ENCODE measurements at regions of chr10 and their contacts with region 1.

Region 1: DNA sequence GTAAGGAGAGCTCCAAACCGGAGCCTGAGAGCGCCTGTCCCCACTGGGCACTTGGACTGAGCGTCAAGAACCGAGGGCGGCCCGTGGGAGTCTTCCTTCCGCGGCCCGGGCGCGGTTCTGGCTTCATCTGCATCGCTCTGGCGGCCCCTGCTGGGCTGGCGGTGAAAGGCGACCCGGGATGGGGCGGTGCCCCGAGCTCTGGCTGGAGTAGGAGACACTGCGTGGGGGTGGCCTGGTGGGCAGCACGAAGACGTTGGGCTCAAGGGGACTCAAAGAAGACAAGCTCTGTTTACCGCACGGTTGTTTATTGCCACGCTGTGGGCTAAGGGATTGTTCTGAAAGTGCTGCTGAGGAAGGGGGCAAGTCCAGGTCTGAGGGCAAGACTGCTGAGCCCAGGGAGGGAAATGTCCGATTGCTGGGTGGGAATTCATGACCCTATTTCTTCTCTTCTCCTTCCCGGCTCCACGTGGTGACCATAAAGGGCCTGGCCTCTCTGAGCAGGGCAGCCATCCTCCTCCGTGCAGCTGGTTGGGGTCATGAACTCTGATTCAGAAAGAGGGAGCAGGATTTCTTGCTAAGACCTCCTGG is 29.8 kb downstream of the PLAU start:
- DNase-seq: peak; percentile 67 to 76 (median 74)
- H3K4me3 ChIP-seq: peak overlapping the region in 4 of 7 experiments; percentile 22 to 61 (median 44)
- H3K27ac ChIP-seq: peak overlapping the region in 1 of 2 experiments; percentile 43
- H3K4me1 ChIP-seq: peaks cover 0 to 11% (median 6%) of the 10 kb centered on the region in 4 experiments
- H3K27me3 ChIP-seq: no peaks in the 10 kb centered on the region

Region 2: DNA sequence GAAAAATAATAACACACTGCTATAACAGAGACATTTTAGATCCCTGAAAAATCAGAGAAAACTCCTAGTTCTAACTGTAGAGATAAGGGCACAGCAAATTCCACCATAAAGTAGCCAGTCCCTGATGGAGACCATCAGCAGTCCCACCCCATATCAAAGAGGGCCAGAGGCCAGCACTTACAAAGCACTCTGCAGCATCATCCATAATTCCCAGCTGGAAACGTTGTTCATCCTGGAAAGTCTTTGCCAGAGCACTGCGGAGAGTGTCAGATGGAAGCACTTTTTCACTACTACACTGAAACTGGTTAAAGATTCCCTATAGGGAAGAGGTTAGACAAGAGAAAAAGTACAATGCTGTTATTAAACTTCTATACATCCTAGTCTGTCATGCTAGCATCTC is 395.4 kb before region 1 on chr10:
- CTCF ChIA-PET with region 1: no interaction called
- POLR2A ChIA-PET with region 1: no interaction called
- DNase-seq: no peak
- H3K4me3 ChIP-seq: no peak overlapping the region
- H3K27ac ChIP-seq: no peak overlapping the region
- H3K4me1 ChIP-seq: no peaks in the 10 kb centered on the region
- H3K27me3 ChIP-seq: no peaks in the 10 kb centered on the region

Region 3: DNA sequence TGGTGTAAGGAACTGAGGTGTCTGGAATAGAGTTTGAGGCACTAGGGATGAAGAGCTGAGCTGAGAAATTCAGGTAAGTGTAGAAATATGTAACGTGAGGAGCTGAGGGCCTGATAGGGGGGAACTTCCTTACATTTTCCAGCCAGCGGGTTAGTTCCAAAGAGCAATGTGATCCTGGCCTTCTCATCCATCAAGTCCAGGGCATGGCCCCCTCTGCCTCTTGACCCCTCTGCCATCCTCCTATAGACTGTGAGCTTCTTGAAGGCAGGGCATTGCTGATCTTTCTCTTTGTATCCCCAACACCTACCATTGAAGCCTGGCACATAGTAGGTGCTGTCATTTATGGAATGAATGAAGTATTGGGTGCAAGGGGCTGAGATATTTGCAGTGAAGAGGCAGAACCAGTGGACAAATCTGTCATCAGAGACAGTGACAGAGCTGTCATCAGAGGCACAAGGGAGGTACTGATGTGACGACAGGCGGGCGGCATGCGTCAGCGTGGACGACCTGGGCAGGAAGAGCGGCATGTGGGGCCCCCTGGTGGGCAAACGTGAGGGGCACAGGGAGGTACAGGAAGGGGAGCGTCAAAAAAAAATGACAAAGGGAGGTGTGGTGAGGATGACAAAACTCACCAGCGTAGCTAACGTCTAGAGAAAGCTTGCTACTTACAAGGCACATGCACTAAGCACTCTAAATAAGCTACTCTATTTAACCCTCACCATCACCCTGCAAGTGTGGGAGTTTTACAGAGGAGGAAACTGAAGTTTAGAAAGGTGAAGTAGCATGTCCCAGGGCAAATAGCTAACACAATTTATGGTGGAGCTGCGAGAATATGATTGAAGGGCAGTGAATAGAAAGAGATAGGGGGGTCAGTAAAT is 61.2 kb before region 1 on chr10:
- CTCF ChIA-PET with region 1: interaction called, 590 read pairs
- POLR2A ChIA-PET with region 1: no interaction called
- DNase-seq: peak; percentile 94 to 96 (median 95)
- H3K4me3 ChIP-seq: peak overlapping the region in 1 of 7 experiments; percentile 44
- H3K27ac ChIP-seq: no peak overlapping the region
- H3K4me1 ChIP-seq: peaks cover 5 to 48% (median 23%) of the 10 kb centered on the region in 4 experiments
- H3K27me3 ChIP-seq: no peaks in the 10 kb centered on the region

Region 4: GRCh38 chr10:73956476-73957359 is 16.0 kb after region 1 on chr10:
- CTCF ChIA-PET with region 1: interaction called, 16 read pairs
- POLR2A ChIA-PET with region 1: no interaction called
- DNase-seq: peak; percentile 89 to 98 (median 96)
- H3K4me3 ChIP-seq: peak overlapping the region in 6 of 7 experiments; percentile 1 to 63 (median 36)
- H3K27ac ChIP-seq: peak overlapping the region; percentile 78 to 86
- H3K4me1 ChIP-seq: peaks cover 40 to 50% (median 43%) of the 10 kb centered on the region in 4 experiments
- H3K27me3 ChIP-seq: no peaks in the 10 kb centered on the region

Region 5: DNA sequence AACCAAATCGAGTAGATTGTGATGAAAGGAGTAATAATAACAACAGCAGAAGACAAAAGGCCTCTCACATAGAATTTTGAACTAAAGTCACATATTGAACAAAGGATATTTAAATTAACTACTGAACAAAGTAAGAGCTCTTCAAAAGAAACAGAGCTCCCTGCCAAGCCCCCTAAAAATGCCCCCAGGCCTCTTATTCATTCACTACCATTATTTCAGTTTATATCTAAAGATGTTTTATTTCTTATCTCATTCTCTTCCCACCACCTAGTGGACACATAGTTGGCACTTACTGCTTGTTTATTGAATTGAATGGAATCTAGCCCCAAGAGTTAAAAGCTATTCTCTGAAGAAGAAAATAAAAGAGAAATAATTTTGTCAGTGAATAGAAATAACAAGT is 94.6 kb after region 1 on chr10:
- CTCF ChIA-PET with region 1: interaction called, 14 read pairs
- POLR2A ChIA-PET with region 1: no interaction called
- DNase-seq: peak in 2 of 3 donors; percentile 48 to 57
- H3K4me3 ChIP-seq: no peak overlapping the region
- H3K27ac ChIP-seq: no peak overlapping the region
- H3K4me1 ChIP-seq: peaks cover 17 to 24% (median 19%) of the 10 kb centered on the region in 4 experiments
- H3K27me3 ChIP-seq: no peaks in the 10 kb centered on the region

Measured in common myeloid progenitor, CD34-positive (primary cell).